Activated CD8-positive, alpha-beta T cell treated with anti-CD3 and anti-CD28 coated beads for 36 hours (primary cell): ENCODE measurements at regions of chr17 and their contacts with region 1.

Region 1: DNA sequence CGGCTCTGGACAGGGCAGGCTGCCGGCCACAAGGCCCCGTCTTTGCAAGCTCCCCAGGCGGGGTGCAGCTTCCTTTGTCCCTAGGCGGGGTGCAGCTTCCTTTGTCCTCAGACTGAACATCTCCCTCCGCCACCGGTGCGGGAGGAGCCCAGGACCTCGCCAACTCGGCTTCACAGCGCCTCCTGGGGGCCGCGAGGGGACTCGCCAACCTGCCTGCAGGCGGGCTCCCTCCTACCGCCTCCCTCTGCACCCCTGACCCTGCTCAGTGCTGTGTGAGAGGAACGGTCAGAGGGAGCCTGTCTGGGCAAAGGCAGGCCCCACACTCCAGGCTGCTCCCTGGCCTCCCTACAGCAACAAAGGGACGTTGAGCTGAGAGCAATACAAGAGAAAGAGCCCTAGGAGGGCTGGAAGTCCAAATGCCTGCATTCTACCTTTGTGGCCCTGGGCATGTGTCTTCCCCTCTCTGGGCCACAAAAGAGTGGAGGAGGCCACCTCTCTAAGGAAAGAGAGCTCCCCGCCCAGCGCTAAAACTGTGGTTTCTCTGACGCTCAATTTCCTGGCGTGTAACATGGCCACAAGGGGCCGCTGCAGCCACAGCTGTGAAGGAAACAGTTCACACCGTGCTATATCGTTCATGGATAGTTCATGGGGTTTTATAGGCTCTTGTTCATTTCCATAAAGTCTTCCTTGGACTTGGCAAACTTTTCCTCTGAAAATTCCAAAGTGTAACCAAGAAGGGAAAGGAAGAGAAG is 20.9 kb upstream of the KRT19 start:
- DNase-seq: peak; percentile 93
- ATAC-seq: peak; percentile 86
- H3K4me3 Mint-ChIP-seq: peak overlapping the region; percentile 24
- H3K27ac Mint-ChIP-seq: peak overlapping the region; percentile 70
- H3K4me1 Mint-ChIP-seq: peaks cover 20% of the 10 kb centered on the region
- H3K27me3 Mint-ChIP-seq: peaks cover 2% of the 10 kb centered on the region
- CTCF ChIP-seq: peak; percentile 98

Region 2: GRCh38 chr17:40909351-40909750 is 639.7 kb before region 1 on chr17:
- CTCF ChIA-PET with region 1: interaction called, 18 read pairs
- POLR2A ChIA-PET with region 1: no interaction called
- intact Hi-C with region 1: no loop called
- DNase-seq: peak; percentile 82
- ATAC-seq: peak; percentile 94
- H3K4me3 Mint-ChIP-seq: no peak overlapping the region
- H3K27ac Mint-ChIP-seq: no peak overlapping the region
- H3K4me1 Mint-ChIP-seq: no peaks in the 10 kb centered on the region
- H3K27me3 Mint-ChIP-seq: peaks cover 23% of the 10 kb centered on the region
- CTCF ChIP-seq: peak; percentile 80

Region 3: GRCh38 chr17:41352597-41353366 is 196.2 kb before region 1 on chr17:
- CTCF ChIA-PET with region 1: no interaction called
- POLR2A ChIA-PET with region 1: no interaction called
- intact Hi-C with region 1: no loop called
- DNase-seq: no peak
- ATAC-seq: no peak
- H3K4me3 Mint-ChIP-seq: no peak overlapping the region
- H3K27ac Mint-ChIP-seq: no peak overlapping the region
- H3K4me1 Mint-ChIP-seq: peaks cover 4% of the 10 kb centered on the region
- H3K27me3 Mint-ChIP-seq: peaks cover 2% of the 10 kb centered on the region
- CTCF ChIP-seq: no peak

Region 4: DNA sequence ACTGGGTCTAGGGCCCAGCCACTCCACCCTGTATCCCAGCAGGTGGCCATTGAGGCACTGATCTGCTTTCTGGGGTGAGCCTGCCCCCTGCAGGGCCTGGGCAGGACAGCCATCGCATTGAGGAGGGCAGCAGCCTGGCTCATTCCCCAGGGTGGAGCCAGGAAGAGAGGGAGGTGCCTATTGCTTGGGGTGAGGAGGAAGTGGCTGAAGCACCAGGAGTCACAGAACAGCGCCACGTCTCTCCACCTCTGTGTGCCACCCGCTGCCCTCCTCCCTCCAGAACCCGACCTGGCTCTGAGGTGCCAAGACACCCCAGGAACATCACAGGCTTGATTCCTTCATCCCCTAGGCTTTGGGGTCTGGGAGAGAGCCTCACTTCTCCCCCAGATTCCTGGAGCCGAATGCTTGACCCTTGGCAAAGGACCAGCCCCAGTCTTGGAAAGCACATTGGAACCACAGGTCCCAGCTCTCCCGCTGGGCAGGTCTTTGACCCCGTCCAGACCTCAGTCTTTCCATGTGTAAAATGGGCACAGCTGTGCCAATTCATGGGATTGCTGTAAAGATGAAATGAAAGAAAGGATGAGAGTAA is 52.1 kb before region 1 on chr17:
- CTCF ChIA-PET with region 1: interaction called, 18 read pairs
- POLR2A ChIA-PET with region 1: no interaction called
- intact Hi-C with region 1: no loop called
- DNase-seq: peak; percentile 86
- ATAC-seq: peak; percentile 100
- H3K4me3 Mint-ChIP-seq: no peak overlapping the region
- H3K27ac Mint-ChIP-seq: peak overlapping the region; percentile 61
- H3K4me1 Mint-ChIP-seq: peaks cover 6% of the 10 kb centered on the region
- H3K27me3 Mint-ChIP-seq: peaks cover 2% of the 10 kb centered on the region
- CTCF ChIP-seq: peak; percentile 84

Region 5: GRCh38 chr17:41535764-41536481 is 13.1 kb before region 1 on chr17:
- CTCF ChIA-PET with region 1: interaction called, 17 read pairs
- POLR2A ChIA-PET with region 1: interaction called, 4 read pairs
- intact Hi-C with region 1: no loop called
- DNase-seq: no peak
- ATAC-seq: no peak
- H3K4me3 Mint-ChIP-seq: no peak overlapping the region
- H3K27ac Mint-ChIP-seq: no peak overlapping the region
- H3K4me1 Mint-ChIP-seq: no peaks in the 10 kb centered on the region
- H3K27me3 Mint-ChIP-seq: peaks cover 34% of the 10 kb centered on the region
- CTCF ChIP-seq: no peak

Region 6: GRCh38 chr17:41579484-41580243 is 30.6 kb after region 1 on chr17:
- CTCF ChIA-PET with region 1: interaction called, 11 read pairs
- POLR2A ChIA-PET with region 1: no interaction called
- intact Hi-C with region 1: no loop called
- DNase-seq: peak; percentile 90
- ATAC-seq: peak; percentile 100
- H3K4me3 Mint-ChIP-seq: no peak overlapping the region
- H3K27ac Mint-ChIP-seq: no peak overlapping the region
- H3K4me1 Mint-ChIP-seq: no peaks in the 10 kb centered on the region
- H3K27me3 Mint-ChIP-seq: peaks cover 38% of the 10 kb centered on the region
- CTCF ChIP-seq: peak; percentile 71

Region 7: GRCh38 chr17:41648411-41649195 is 99.6 kb after region 1 on chr17:
- CTCF ChIA-PET with region 1: interaction called, 156 read pairs
- POLR2A ChIA-PET with region 1: interaction called, 16 read pairs
- intact Hi-C with region 1: loop called (anchors 1 kb)
- DNase-seq: peak; percentile 88
- ATAC-seq: peak; percentile 92
- H3K4me3 Mint-ChIP-seq: peak overlapping the region; percentile 43
- H3K27ac Mint-ChIP-seq: peak overlapping the region; percentile 65
- H3K4me1 Mint-ChIP-seq: peaks cover 7% of the 10 kb centered on the region
- H3K27me3 Mint-ChIP-seq: peaks cover 3% of the 10 kb centered on the region
- CTCF ChIP-seq: peak; percentile 88

Region 8: DNA sequence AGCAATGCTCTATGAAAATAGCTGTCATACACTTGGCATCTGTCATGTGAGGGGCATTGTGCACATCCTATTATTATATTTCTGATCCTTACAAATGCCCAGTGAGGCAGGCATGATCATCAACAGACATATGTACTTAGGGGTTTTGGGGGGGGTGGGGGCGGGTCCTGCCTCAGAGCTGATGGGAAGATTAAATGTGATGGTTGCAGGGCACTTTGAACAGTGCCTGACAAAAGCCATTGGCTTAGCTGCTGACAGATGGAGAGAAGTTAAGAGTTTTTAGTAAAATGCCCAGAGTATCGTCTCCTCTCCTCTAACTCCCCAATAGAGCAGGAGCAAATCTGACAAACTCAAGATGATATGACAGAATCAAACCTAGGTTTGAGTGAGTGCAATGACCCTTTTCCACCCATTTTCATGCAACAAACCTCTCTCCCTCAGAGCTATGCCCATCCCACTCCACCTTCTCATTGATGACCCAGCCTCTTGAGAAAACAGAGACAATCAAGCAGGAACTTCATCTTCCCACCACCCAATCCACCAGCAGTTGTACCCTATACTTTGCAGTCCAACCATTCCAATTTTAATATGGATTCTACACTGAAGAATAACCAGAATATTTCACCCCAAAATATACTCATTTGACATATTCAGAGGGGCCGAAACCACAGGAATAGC is 311.4 kb after region 1 on chr17:
- CTCF ChIA-PET with region 1: no interaction called
- POLR2A ChIA-PET with region 1: no interaction called
- intact Hi-C with region 1: no loop called
- DNase-seq: no peak
- ATAC-seq: no peak
- H3K4me3 Mint-ChIP-seq: no peak overlapping the region
- H3K27ac Mint-ChIP-seq: peak overlapping the region; percentile 0
- H3K4me1 Mint-ChIP-seq: peaks cover 20% of the 10 kb centered on the region
- H3K27me3 Mint-ChIP-seq: no peaks in the 10 kb centered on the region
- CTCF ChIP-seq: no peak